ENCODE measurements at regions of chr11 and their contacts with region 1.

Region 1: GRCh38 chr11:63945477-63946163 is 6.8 kb downstream of the NAA40 start:
- DNase-seq: peak; percentile 59
- H3K4me3 Mint-ChIP-seq: no peak overlapping the region
- H3K27ac Mint-ChIP-seq: no peak overlapping the region
- H3K4me1 Mint-ChIP-seq: peaks cover 15% of the 10 kb centered on the region
- H3K27me3 Mint-ChIP-seq: no peaks in the 10 kb centered on the region

Region 2: DNA sequence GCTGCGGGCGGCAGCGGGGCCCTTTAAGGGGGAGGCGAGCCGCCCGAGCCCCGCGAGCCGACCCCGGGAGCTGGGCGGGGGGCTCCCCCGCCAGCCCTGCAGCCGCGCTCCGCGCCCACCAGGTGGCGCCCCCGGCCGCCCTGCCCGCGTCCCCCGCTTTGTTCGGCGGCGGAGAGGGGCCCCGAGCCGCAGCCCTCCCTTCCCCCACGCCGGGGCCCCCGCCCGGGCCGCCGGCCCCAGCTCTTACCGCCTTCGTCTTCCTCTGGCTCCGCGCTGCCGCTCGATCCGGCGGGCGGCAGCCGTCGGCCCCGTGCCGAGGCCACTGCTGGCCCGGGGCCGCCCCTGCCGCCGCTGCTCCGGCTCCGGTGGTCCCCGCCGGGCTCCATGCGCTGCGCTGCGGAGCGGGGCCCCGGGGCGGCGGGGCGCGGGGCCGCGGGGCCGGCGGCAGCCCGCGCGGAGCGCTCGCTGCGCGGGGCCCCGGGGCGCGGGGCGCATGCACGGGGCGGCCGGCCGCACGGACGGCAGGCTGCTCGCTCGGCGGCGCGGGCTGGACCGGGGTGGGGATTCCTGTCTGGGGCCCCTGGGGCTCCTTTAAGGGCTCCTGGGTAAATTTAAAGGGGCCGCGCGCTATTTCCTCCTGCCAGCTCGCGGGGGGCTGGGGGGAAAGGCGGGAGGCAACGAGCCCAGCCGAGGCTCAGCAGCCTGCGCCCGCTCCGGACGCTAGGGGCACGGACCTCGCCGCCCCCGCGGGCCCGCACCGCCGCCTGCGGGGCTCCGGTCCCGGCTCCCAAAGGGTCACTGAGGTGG is 177.2 kb before region 1 on chr11 and contains the start of gene ZFTA:
- CTCF ChIA-PET with region 1: interaction called, 17 read pairs
- POLR2A ChIA-PET with region 1: no interaction called
- DNase-seq: peak; percentile 57
- H3K4me3 Mint-ChIP-seq: peak within 1 kb of the TSS; percentile 90
- H3K27ac Mint-ChIP-seq: peak within 1 kb of the TSS; percentile 2
- H3K4me1 Mint-ChIP-seq: peaks cover 13% of the 10 kb centered on the region
- H3K27me3 Mint-ChIP-seq: peaks cover 31% of the 10 kb centered on the region
- total RNA-seq, gene ZFTA: 1.1 to 1.7 TPM

Region 3: GRCh38 chr11:63961608-63962412 is 16.2 kb after region 1 on chr11:
- CTCF ChIA-PET with region 1: interaction called, 17 read pairs
- POLR2A ChIA-PET with region 1: interaction called, 10 read pairs
- DNase-seq: peak; percentile 67
- H3K4me3 Mint-ChIP-seq: peak overlapping the region; percentile 19
- H3K27ac Mint-ChIP-seq: no peak overlapping the region
- H3K4me1 Mint-ChIP-seq: peaks cover 26% of the 10 kb centered on the region
- H3K27me3 Mint-ChIP-seq: peaks cover 3% of the 10 kb centered on the region

Measured in activated CD4-positive, alpha-beta memory T cell treated with anti-CD3 and anti-CD28 coated beads, Interleukin-2, amount 10 ng/mL, durations not matched to agents 7 days and 5 days (primary cell).